RWPE1 (cell line): ENCODE measurements at regions of chr1 and their contacts with region 1.

Region 1: DNA sequence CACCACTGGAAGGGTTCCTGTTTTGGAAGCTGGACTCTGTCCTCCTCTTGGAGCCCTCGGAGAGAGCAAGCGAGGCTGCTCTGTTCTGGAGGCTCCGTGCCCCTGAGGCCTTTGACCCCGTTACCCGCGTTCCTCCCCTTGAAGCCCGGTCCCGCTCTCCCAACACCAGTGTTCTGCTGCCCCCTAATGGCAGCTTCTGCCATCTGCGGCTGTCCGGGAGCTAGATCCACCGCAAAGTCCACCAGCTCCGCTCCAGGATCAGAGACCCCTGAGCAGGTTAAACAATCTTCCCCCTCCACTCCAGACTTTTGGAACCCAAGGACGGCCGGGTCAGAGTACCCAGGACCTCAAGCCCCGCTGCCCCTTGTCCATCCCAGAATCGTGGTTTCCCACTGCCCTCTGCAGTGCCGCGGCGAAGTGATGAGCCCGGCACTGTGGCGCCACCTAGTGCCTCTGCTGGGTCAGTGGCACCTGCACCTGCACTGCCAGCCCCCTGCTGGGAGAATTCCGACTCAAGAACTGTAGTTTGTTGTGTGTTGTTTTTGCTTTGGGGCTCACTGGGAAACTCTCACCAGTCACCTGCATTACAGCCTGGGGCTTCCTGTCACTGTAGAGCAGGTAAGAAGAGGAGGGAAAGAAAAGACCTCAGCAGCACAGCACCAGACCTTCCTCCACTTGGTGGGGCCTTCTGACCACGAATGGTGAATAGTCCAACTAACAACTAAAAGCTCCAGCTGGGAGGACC is 63.5 kb upstream of the NFASC start:
- DNase-seq: peak; percentile 97
- H3K27ac ChIP-seq: no peak overlapping the region
- CTCF ChIP-seq: peak; percentile 98

Region 2: DNA sequence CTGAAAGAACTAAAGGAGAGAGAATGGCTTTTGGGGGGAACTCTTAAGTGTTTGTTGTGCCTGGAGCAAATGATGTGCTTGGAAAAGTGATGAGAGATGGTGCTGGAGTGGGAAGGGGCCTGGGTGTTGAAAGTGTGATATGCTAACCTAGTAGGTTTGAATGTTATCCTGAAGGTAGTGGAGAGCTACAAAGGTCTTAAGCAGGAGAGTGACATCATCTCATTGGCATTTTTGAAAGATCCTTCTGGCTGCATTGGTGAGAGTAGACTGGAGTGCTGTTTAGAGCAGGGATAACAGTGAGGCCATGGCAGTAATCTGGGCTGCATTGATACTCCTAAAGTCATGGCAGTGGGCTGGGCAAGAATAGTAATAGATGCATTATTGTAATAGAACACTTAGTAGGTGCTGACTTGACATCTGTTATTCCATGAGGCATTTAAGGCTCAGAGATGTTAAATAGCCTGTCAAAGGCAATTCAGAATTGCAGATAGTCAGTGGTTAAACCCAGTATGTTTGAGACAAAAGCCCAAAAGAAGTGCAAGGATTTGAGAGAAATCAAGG is 246.4 kb before region 1 on chr1:
- CTCF ChIA-PET with region 1: interaction called, 62 read pairs
- POLR2A ChIA-PET with region 1: no interaction called
- DNase-seq: no peak
- H3K27ac ChIP-seq: no peak overlapping the region
- CTCF ChIP-seq: no peak

Region 3: DNA sequence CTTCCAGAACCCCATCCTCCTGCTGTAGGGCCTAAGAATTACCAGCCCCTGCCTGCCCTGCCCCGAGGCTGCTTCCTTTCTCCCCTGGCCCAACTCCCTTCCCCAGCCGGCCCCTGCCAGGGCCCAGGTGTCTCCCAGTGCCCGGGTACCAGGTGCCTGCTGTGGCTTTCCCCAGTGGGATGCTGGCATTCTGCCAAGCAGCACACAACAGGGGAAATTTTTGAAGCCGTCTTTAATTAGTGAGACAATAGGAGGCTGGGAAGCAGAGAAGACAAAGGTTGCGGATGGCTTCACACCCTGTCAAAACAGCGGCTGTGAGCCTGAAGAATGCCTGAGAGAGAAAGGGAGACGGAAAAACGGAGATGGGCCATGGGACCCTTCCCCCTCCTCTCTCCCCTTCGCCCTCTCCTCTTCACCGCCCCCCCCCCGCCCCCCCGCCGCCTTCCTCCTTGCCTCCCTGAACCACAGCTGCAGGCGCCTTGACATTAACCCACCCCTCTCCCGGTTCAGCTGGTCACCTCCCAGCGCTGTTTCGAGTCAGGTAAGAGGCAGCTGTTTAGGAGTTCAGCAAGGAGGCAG is 155.2 kb before region 1 on chr1:
- CTCF ChIA-PET with region 1: interaction called, 41 read pairs
- POLR2A ChIA-PET with region 1: no interaction called
- DNase-seq: no peak
- H3K27ac ChIP-seq: no peak overlapping the region
- CTCF ChIP-seq: no peak

Region 4: GRCh38 chr1:204763706-204764427 is 43.2 kb before region 1 on chr1:
- CTCF ChIA-PET with region 1: interaction called, 18 read pairs
- POLR2A ChIA-PET with region 1: no interaction called
- DNase-seq: peak; percentile 92
- H3K27ac ChIP-seq: no peak overlapping the region
- CTCF ChIP-seq: peak; percentile 63

Region 5: GRCh38 chr1:204830747-204831146 is 23.6 kb after region 1 on chr1:
- CTCF ChIA-PET with region 1: interaction called, 13 read pairs
- POLR2A ChIA-PET with region 1: no interaction called
- DNase-seq: no peak
- H3K27ac ChIP-seq: no peak overlapping the region
- CTCF ChIP-seq: no peak

Region 6: DNA sequence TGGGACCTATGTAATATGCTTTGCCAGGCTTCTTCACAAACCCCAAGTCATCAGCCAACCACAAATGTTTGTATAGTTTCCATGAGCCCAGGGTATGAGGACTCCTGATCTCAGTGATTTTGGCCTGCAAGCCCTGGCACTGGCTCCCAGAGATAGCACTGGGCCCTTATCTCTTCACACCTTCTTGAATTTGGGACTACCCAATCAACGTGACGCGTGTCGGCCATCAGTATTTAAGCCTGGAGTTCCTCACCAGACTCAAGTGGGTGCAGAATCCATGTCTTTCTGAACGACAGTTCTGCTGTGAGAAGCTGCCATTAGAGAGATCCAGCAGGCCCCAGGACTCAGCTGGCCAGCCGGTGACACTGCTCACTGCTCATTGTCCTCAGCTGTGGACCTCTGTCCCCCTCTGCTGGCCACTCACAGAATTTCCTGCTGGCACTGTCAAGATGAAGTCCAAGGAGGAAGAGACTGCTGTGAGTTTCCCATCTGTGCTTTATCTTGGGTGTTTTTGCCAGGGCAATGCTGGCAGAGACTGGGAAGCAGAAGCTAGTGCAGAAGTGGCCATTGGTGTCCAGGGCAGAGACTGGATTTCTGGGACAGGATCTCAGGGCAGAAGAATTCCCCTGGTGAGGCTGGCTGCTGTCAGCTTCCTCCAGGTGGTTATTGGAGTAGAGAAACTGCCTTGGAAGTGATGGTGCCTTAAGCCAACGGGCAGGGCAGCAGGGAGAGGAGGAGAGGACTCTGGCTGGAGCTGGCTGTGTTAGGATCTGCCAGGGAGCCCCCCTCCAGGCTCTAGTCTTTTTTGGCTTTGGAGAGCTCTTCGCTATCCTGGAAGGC is 449.0 kb after region 1 on chr1:
- CTCF ChIA-PET with region 1: interaction called, 14 read pairs
- POLR2A ChIA-PET with region 1: no interaction called
- DNase-seq: peak; percentile 88
- H3K27ac ChIP-seq: peak overlapping the region; percentile 51
- CTCF ChIP-seq: peak; percentile 94